ENCODE measurements at regions of chr12 and their contacts with region 1.

Region 1: GRCh38 chr12:67482751-67483671 is 165.5 kb upstream of the DYRK2 start:
- DNase-seq: peak; percentile 55 to 78
- H3K4me3 ChIP-seq: peak overlapping the region; percentile 19; the same call in 1 of the 2 replicates
- H3K27ac ChIP-seq: peak overlapping the region; percentile 92
- H3K4me1 ChIP-seq: peaks cover 64% of the 10 kb centered on the region
- H3K27me3 ChIP-seq: no peaks in the 10 kb centered on the region
- CTCF ChIP-seq: no peak

Region 2: DNA sequence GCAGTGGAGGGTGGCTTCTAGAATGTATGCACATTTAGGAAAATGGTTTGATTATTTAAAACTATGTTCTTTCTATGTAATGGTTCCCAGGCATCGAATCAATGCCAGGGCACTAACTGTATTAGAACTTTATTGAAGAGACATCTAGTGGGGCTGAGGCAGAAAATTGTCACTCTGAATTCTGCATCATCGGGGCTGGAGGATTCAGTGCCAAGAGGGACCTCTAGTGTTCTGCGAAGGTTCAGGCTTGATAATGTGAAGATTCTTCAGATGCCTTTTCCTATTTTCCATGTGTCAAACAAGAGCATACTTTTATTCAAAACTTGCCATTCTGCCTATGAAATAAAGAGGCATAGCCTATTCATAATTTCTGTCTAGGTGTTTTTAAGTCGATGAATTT is 67.5 kb before region 1 on chr12:
- CTCF ChIA-PET with region 1: no interaction called
- POLR2A ChIA-PET with region 1: no interaction called
- intact Hi-C with region 1: no loop called
- DNase-seq: no peak
- H3K4me3 ChIP-seq: no peak overlapping the region
- H3K27ac ChIP-seq: no peak overlapping the region
- H3K4me1 ChIP-seq: peaks cover 18% of the 10 kb centered on the region
- H3K27me3 ChIP-seq: no peaks in the 10 kb centered on the region
- CTCF ChIP-seq: peak; percentile 43

Region 3: DNA sequence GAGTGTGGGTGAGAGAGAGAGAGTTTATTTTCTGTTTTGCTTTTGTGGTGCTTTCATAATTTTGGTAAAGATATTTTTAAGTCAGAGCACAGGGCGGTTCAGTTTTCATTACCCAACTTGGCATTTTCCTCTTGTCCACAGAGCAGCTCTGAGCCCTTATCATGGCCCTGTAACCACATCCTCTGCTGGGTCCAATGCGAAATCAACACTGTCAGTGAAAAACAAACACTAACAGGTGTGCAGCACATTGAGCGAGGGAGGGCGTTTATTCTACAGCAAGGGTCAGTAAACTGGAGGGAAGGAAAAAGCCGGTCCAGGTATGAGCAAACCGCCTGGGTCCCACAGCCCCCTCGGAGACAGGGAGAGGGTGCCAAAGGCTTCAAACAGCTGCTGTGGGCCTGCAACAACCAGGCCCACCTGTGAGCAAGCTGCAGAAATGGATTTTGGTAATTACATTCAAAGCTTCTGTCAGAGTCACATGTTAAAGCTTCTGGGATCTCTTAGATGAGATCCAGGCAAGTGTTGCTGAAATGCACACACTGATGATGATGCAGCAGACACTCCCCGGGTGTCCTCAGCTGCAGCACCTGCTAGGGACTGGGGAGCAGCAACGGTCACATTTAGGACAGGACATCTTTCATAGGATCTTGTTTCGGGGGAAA is 32.8 kb after region 1 on chr12:
- CTCF ChIA-PET with region 1: no interaction called
- POLR2A ChIA-PET with region 1: interaction called, 4 read pairs
- intact Hi-C with region 1: loop called (anchors 1 kb)
- DNase-seq: peak; percentile 3 to 70
- H3K4me3 ChIP-seq: no peak overlapping the region
- H3K27ac ChIP-seq: peak overlapping the region; percentile 70; the same call in 1 of the 2 replicates
- H3K4me1 ChIP-seq: peaks cover 48% of the 10 kb centered on the region
- H3K27me3 ChIP-seq: no peaks in the 10 kb centered on the region
- CTCF ChIP-seq: no peak

Region 4: DNA sequence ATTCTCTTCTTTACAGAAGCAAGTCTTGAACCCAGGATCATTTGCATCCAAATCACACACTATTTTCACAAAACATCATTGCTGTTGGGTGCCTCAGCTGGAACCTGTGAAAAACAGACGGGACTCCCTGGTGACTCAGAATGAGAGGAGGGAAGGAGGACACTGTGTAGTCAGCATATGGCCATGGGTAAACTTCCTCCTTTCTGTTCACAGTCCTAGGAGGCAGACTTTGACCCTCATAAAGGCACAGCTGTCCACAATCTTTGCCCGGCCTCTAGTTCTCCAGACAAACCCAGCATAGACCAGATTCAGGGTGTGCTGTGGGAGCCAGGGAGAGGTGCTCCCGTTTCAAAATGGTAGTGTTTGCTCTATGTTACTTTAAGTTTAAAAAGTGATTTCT is 227.6 kb after region 1 on chr12:
- CTCF ChIA-PET with region 1: no interaction called
- POLR2A ChIA-PET with region 1: no interaction called
- intact Hi-C with region 1: loop called (anchors 10 kb)
- DNase-seq: peak in 1 of 2 experiments; percentile 46
- H3K4me3 ChIP-seq: no peak overlapping the region
- H3K27ac ChIP-seq: no peak overlapping the region
- H3K4me1 ChIP-seq: peaks cover 55% of the 10 kb centered on the region
- H3K27me3 ChIP-seq: no peaks in the 10 kb centered on the region
- CTCF ChIP-seq: no peak

Region 5: DNA sequence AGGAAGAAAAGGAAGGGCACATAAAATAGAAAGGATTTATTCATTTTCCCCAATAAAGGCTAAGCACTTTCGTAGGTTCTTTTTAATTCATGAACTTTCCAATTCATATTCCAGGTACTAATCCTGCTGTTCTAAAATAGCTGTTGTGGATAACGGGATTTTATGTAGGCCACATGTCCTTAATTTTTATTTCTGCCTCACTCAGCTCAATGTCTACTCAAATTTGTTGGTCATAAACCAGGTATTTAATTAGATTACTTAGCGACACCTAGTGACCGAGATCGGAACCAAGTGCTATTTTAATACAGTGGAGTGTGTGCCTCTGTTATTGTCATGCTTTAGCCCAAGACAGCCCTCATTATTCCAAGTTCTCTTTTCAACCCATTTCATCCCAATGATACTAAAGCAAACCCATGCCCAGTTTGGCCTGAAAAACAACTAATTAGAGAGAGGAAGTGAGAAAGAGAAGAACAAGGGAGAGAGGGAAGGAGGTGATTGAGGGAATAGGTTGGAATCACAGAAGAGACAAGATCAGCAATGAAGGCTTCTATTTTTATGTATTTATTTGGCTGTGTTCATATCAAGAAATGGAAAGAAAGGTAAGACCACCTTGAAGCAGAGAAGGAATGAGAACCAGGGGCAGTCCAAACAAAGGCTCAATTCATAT is 460.3 kb after region 1 on chr12:
- CTCF ChIA-PET with region 1: interaction called, 5 read pairs
- POLR2A ChIA-PET with region 1: interaction called, 8 read pairs
- intact Hi-C with region 1: loop called (anchors 1 kb)
- DNase-seq: peak; percentile 50 to 52
- H3K4me3 ChIP-seq: no peak overlapping the region
- H3K27ac ChIP-seq: no peak overlapping the region
- H3K4me1 ChIP-seq: peaks cover 41% of the 10 kb centered on the region
- H3K27me3 ChIP-seq: no peaks in the 10 kb centered on the region
- CTCF ChIP-seq: peak; percentile 83